CD14-positive monocyte (primary cell): ENCODE measurements at regions of chr6 and their contacts with region 1.

Region 1: DNA sequence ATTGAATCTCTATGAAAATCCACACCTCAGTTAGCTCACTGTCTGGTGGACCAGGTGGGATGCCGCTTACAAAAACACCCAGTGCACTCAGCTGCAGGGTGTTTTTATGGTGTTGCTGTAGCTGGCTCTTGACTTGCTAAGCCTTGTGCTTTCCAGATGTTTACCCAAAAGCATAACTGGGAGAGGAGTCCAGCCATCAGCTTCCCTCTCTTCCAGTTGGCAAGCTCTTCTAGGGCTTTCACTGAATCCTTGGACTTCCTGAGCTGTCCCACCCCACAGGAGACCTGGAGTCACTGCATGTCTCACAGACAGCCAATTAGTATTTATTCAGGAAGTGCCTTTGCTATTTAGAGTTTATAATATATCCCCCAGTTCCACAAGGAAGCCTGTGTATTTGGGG is 210.9 kb downstream of the FNDC1 start:
- DNase-seq: no peak
- H3K4me3 ChIP-seq: no peak overlapping the region
- H3K4me3 Mint-ChIP-seq: no peak overlapping the region
- H3K27ac ChIP-seq: no peak overlapping the region
- H3K27ac Mint-ChIP-seq: no peak overlapping the region
- H3K4me1 ChIP-seq: no peaks in the 10 kb centered on the region
- H3K4me1 Mint-ChIP-seq: no peaks in the 10 kb centered on the region
- H3K27me3 ChIP-seq: no peaks in the 10 kb centered on the region
- H3K27me3 Mint-ChIP-seq: peaks cover 0 to 2% (median 0%) of the 10 kb centered on the region in 3 donors
- CTCF ChIP-seq: no peak

Region 2: GRCh38 chr6:159342145-159342544 is 38.0 kb before region 1 on chr6:
- intact Hi-C with region 1: loop called in 1 of 2 experiments (anchors 5 kb)
- DNase-seq: no peak
- H3K4me3 ChIP-seq: no peak overlapping the region
- H3K4me3 Mint-ChIP-seq: no peak overlapping the region
- H3K27ac ChIP-seq: no peak overlapping the region
- H3K27ac Mint-ChIP-seq: no peak overlapping the region
- H3K4me1 ChIP-seq: no peaks in the 10 kb centered on the region
- H3K4me1 Mint-ChIP-seq: no peaks in the 10 kb centered on the region
- H3K27me3 ChIP-seq: no peaks in the 10 kb centered on the region
- H3K27me3 Mint-ChIP-seq: peaks cover 0 to 5% (median 1%) of the 10 kb centered on the region in 3 donors
- CTCF ChIP-seq: no peak

Region 3: GRCh38 chr6:159463119-159463829 is 83.2 kb after region 1 on chr6:
- intact Hi-C with region 1: no loop called
- DNase-seq: no peak
- H3K4me3 ChIP-seq: no peak overlapping the region
- H3K4me3 Mint-ChIP-seq: no peak overlapping the region
- H3K27ac ChIP-seq: no peak overlapping the region
- H3K27ac Mint-ChIP-seq: no peak overlapping the region
- H3K4me1 ChIP-seq: peaks cover 0 to 5% of the 10 kb centered on the region in 2 donors
- H3K4me1 Mint-ChIP-seq: peaks cover 47% of the 10 kb centered on the region
- H3K27me3 ChIP-seq: no peaks in the 10 kb centered on the region
- H3K27me3 Mint-ChIP-seq: peaks cover 0 to 8% (median 8%) of the 10 kb centered on the region in 3 donors
- CTCF ChIP-seq: no peak

Region 4: GRCh38 chr6:159473475-159474263 is 93.6 kb after region 1 on chr6:
- intact Hi-C with region 1: no loop called
- DNase-seq: no peak
- H3K4me3 ChIP-seq: no peak overlapping the region
- H3K4me3 Mint-ChIP-seq: no peak overlapping the region
- H3K27ac ChIP-seq: no peak overlapping the region
- H3K27ac Mint-ChIP-seq: no peak overlapping the region
- H3K4me1 ChIP-seq: no peaks in the 10 kb centered on the region
- H3K4me1 Mint-ChIP-seq: no peaks in the 10 kb centered on the region
- H3K27me3 ChIP-seq: no peaks in the 10 kb centered on the region
- H3K27me3 Mint-ChIP-seq: peaks cover 0 to 2% (median under 1%) of the 10 kb centered on the region in 3 donors
- CTCF ChIP-seq: no peak